ENCODE measurements at regions of chr6 and their contacts with region 1.

Region 1: DNA sequence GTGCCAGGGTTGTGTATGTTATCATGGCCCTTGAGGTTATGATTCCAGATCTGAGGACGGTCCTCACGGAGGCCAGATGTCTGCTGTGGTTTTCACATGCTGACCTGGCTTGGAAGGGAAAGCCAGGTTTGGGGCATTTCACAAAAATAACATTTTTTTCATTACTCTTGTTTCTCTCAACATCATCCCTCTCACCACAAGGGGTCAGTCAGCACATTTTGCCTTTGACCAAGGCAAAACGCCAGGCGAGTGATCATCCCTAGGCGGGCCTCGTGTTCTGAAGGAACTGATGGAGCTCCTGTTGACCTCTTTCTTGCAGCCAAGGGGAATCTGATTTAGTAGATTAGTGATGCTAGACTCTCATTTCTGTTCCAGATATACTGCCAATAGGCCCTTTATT is 133.5 kb downstream of the TBC1D7 start:
- DNase-seq: peak; percentile 53
- ATAC-seq: peak; percentile 55 to 61

Region 2: GRCh38 chr6:13026557-13026956 is 168.3 kb before region 1 on chr6:
- intact Hi-C with region 1: no loop called
- DNase-seq: no peak
- ATAC-seq: peak in 1 of 2 donors; percentile 52

Region 3: GRCh38 chr6:13302751-13303667 is 108.2 kb after region 1 on chr6:
- intact Hi-C with region 1: loop called in 1 of 2 experiments (anchors 10 kb)
- DNase-seq: peak; percentile 66
- ATAC-seq: peak; percentile 56 to 88